ENCODE measurements at regions of chr5 and their contacts with region 1.

Region 1: GRCh38 chr5:133287500-133287899 is 235.7 kb downstream of the HSPA4 start:
- DNase-seq: peak in 28 of 35 experiments; percentile 3 to 59 (median 30)
- ATAC-seq: peak in 3 of 4 experiments; percentile 54 to 68 (median 57)
- H3K4me3 ChIP-seq: no peak overlapping the region
- H3K4me3 Mint-ChIP-seq: no peak overlapping the region
- H3K27ac ChIP-seq: no peak overlapping the region
- H3K27ac Mint-ChIP-seq: no peak overlapping the region
- H3K4me1 ChIP-seq: no peaks in the 10 kb centered on the region
- H3K4me1 Mint-ChIP-seq: no peaks in the 10 kb centered on the region
- H3K27me3 ChIP-seq: peaks cover 0 to 8% of the 10 kb centered on the region in 2 experiments
- H3K27me3 Mint-ChIP-seq: no peaks in the 10 kb centered on the region

Region 2: DNA sequence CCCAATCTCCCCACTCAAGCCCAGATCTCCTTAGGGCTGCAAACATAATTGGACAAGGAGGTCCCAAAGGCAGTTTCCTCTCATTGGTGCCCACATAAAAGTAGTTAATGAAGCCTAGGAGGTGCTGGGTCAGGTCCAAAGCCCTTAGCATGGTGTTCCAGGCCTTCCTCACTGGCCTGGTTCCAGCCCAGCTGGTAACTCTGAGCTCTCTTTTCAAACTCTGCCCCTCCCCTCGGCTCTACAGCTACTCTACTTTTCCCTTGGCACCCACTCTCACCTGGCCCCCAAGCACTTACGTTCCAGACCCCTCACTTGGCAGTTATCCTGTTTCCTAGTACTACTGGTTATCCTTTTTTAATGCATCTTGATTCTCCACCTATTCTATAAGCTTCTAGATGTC is 520.4 kb before region 1 on chr5:
- CTCF ChIA-PET with region 1: no interaction called
- POLR2A ChIA-PET with region 1: no interaction called
- DNase-seq: no peak
- ATAC-seq: no peak
- H3K4me3 ChIP-seq: no peak overlapping the region
- H3K4me3 Mint-ChIP-seq: no peak overlapping the region
- H3K27ac ChIP-seq: no peak overlapping the region
- H3K27ac Mint-ChIP-seq: no peak overlapping the region
- H3K4me1 ChIP-seq: no peaks in the 10 kb centered on the region
- H3K4me1 Mint-ChIP-seq: no peaks in the 10 kb centered on the region
- H3K27me3 ChIP-seq: no peaks in the 10 kb centered on the region
- H3K27me3 Mint-ChIP-seq: no peaks in the 10 kb centered on the region

Region 3: DNA sequence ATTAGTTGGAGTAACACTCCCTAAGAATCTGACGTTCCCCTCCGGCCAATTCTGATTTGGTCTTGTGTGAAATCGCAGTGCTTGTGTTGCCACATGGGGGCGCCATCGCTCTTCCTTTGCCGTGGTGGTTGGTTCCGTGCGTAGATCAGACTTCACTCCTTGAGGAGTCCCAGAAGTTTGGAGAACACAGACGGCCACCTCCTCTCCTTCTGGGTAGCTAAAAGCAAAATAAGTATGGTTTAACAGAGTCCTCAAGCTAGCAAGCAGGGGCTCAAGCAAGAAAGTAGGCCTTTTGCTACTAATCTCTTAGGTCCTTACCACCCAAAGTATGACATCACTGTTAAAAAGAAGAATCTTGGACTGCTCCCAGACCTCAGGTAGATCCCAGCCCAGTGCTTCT is 176.2 kb before region 1 on chr5:
- CTCF ChIA-PET with region 1: interaction called, 4 to 14 read pairs
- POLR2A ChIA-PET with region 1: no interaction called
- DNase-seq: peak; percentile 44 to 90 (median 73)
- ATAC-seq: peak; percentile 68 to 79 (median 72)
- H3K4me3 ChIP-seq: no peak overlapping the region
- H3K4me3 Mint-ChIP-seq: no peak overlapping the region
- H3K27ac ChIP-seq: no peak overlapping the region
- H3K27ac Mint-ChIP-seq: no peak overlapping the region
- H3K4me1 ChIP-seq: peaks cover 4 to 17% of the 10 kb centered on the region in 2 experiments
- H3K4me1 Mint-ChIP-seq: peaks cover 21 to 28% (median 27%) of the 10 kb centered on the region in 3 donors
- H3K27me3 ChIP-seq: peaks cover 0 to 4% of the 10 kb centered on the region in 2 experiments
- H3K27me3 Mint-ChIP-seq: no peaks in the 10 kb centered on the region